ENCODE measurements at regions of chr2 and their contacts with region 1.

Region 1: DNA sequence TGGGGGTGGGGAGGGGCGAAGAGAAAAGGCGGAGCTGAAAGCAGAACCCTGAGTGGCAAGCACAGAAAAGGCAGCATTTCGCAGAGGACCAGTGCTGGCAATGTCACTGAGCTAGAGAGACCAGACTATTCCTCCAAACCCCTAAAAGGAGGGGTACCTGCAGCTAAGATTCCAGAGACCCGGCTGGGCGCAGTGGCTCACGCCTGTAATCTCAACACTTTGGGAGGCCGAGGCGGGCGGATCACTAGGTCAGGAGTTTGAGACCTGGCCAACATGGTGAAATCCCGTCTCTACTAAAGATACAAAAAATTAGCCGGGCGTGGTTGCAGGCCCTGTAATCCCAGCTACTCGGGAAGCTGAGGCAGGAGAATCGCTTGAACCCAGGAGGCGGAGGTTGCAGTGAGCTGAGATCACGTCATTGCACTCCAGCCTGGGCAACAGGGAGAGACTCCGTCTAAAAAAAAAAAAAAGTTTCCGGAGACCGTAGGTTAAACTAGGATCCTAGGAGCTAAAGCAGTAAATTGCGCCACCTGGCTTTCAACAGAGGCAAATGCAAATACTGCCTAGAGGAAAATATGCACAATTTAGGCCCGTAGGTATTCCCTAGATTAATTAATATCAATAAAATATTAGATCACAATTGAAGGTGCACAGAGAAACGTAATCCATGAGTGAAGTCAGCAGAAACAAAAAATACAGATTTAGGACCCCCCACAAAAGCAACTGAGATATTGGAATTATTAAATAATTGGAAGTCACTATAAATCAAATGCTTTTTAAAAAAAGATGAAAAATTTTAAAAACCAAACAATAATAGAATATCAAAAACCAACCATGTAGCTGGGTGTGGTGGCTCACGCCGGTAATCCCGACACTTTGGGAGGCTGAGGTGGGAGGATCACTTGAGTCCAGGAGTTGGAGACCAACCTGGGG is 4.9 kb downstream of the UCN start:
- DNase-seq: peak; percentile 60 to 82 (median 72)
- H3K4me3 ChIP-seq: peak overlapping the region in 1 of 4 donors; percentile 50
- H3K27ac ChIP-seq: peak overlapping the region in 3 of 5 donors; percentile 27 to 60 (median 30)
- H3K4me1 ChIP-seq: peaks cover 10 to 18% of the 10 kb centered on the region in 2 donors
- H3K27me3 ChIP-seq: peaks cover 19% of the 10 kb centered on the region
- CTCF ChIP-seq: peak; percentile 85 to 98 (median 92)
- POLR2A ChIP-seq: peak in 1 of 2 donors; percentile 11

Region 2: GRCh38 chr2:27095745-27096651 is 207.4 kb before region 1 on chr2:
- intact Hi-C with region 1: loop called in 1 of 2 experiments (anchors 5 kb)
- DNase-seq: peak; percentile 68 to 85 (median 76)
- H3K4me3 ChIP-seq: peak overlapping the region in 2 of 4 donors; percentile 5 to 41
- H3K27ac ChIP-seq: peak overlapping the region in 3 of 5 donors; percentile 52 to 78 (median 58)
- H3K4me1 ChIP-seq: peaks cover 13 to 26% of the 10 kb centered on the region in 2 donors
- H3K27me3 ChIP-seq: no peaks in the 10 kb centered on the region
- CTCF ChIP-seq: no peak
- POLR2A ChIP-seq: no peak

Region 3: DNA sequence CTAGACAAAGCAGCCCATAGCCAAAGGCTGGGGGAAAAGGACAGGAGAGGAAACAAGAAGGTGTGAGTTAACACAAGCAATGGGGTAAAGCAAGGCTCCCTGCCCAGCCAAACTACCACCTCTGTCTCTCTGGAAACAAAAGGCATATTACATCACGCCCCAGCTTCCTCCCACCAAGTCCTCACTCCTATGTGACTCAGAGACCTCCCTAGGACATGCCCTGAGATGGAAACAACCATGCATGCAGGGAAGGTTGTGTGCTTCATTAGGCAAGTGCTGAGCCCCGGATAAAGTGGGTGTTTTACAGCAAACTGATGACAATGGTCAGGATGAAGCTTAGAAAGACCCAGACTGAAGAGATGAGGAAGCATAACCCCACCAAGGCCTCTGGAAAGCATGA is 100.5 kb before region 1 on chr2:
- intact Hi-C with region 1: no loop called
- DNase-seq: no peak
- H3K4me3 ChIP-seq: no peak overlapping the region
- H3K27ac ChIP-seq: no peak overlapping the region
- H3K4me1 ChIP-seq: no peaks in the 10 kb centered on the region
- H3K27me3 ChIP-seq: no peaks in the 10 kb centered on the region
- CTCF ChIP-seq: no peak
- POLR2A ChIP-seq: no peak

Region 4: GRCh38 chr2:27249891-27250651 is 53.3 kb before region 1 on chr2:
- intact Hi-C with region 1: loop called in 1 of 2 experiments (anchors 10 kb)
- DNase-seq: peak; percentile 64 to 76 (median 74)
- H3K4me3 ChIP-seq: no peak overlapping the region
- H3K27ac ChIP-seq: no peak overlapping the region
- H3K4me1 ChIP-seq: peaks cover 6 to 9% of the 10 kb centered on the region in 2 donors
- H3K27me3 ChIP-seq: no peaks in the 10 kb centered on the region
- CTCF ChIP-seq: peak; percentile 70 to 85 (median 80)
- POLR2A ChIP-seq: no peak

Measured in adrenal gland (tissue), 19 donors.